Prostate gland (tissue), 2 donors: ENCODE measurements at regions of chr2 and their contacts with region 1.

Region 1: DNA sequence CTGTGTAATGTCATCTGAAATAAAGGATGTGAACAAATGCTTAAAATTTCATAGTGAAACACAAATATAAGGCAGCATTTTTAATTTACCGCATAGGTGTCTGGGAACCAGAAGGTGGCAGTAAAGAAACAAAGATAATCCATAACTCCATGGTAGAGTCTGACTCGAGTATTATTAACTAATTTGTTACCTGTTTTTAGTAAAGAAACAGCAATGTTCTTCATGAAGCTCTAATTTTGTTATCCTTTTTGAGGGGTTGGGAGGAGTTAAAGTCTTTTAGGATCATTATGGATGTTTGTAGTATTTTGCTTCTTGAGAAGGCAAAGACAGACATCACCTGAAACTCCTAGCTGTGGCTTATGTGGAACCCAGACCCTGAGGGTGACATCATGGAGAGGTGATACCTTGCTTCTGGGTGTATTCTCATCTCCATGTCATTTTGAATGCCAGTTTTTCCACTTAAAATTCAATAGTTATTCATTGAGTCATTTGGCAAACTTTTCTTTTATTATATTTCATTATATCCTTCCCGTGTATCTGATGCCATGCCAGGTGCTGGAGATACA is 286.2 kb upstream of the EPAS1 start:
- DNase-seq: no peak
- H3K4me3 ChIP-seq: no peak overlapping the region
- H3K27ac ChIP-seq: no peak overlapping the region
- H3K4me1 ChIP-seq: no peaks in the 10 kb centered on the region
- H3K27me3 ChIP-seq: no peaks in the 10 kb centered on the region
- CTCF ChIP-seq: peak; percentile 53 to 91 (median 78)
- POLR2A ChIP-seq: no peak

Region 2: DNA sequence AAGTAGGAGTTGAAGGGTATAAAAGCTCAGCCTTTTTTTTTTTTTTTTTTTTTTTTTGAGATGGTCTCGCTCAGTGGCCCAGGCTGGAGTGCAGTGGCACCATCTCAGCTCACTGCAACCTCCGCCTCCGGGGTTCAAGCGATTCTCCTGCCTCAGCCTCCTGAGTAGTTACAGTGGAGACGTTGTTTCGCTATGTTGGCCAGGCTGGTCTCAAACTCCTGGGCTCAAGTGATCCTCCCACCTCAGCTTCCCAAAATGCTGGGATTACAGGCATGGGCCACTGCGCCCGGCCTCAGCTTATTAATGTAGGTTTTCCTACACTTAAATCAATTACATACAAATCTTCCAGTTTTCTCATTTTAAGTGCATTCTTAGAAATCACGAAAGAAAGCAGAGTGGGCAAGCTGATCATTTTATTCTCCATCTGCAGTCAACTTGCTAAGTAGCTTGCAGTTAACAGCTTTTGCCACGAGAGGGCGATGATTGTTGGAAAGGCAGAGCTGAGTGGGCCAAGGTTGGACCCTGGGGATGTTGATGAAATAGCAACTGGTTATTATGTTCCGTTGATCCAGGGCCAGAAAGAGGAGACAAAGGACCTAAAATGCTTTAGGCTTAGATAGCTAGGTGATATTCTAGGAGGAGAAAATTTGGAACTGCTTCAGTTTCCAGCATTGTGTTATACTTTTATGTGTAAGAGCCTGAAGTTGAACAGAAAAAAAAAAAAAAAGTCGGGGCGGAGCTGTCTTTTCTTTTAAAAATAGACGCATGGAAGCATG is 51.8 kb after region 1 on chr2:
- intact Hi-C with region 1: loop called (anchors 5 kb)
- DNase-seq: peak; percentile 73
- H3K4me3 ChIP-seq: no peak overlapping the region
- H3K27ac ChIP-seq: no peak overlapping the region
- H3K4me1 ChIP-seq: peaks cover 12% of the 10 kb centered on the region
- H3K27me3 ChIP-seq: no peaks in the 10 kb centered on the region
- CTCF ChIP-seq: peak; percentile 46 to 85 (median 76)
- POLR2A ChIP-seq: no peak

Region 3: DNA sequence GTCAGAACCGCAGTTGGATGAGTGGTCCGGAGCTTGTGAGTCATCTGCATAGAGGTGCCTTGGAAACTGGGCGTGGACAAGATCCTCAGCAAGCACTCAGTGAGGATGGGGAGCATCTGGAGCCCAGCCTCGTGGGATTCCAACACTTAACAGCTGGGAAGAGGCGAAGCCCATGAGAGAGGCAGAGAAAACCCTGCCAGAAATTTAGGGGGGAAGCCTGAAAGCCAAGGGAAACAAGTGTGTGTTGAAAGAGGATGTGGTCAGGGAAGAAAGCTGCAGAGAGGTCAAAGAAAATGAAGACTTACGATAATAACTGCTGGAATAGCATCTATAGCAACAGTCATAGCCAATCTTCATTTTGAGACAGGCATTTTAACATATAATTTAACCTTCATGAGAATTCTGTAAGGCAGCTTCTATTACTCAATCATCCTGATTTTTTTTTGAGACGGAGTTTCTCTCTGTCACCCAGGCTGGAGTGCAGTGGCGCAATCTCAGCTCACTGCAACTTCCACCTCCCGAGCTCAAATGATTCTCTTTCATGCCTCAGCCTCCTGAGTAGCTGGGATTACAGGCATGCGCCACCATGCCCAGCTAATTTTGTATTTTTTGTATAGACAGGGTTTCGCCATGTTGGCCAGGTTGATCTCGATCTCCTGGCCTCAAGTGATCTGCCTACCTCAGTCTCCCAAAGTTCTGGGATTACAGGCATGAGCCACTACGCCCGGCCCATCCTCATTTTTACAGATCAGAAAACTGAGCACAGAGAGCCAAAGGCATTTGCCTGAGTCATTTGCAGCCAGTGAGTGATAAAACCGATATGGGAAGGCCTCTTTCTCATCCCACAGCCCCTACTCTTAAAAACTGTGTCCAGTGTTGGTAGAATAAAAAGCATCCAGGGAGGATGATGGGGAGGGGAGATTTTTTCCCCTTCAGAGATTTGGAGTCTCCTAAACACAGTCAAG is 71.8 kb after region 1 on chr2:
- intact Hi-C with region 1: no loop called
- DNase-seq: no peak
- H3K4me3 ChIP-seq: no peak overlapping the region
- H3K27ac ChIP-seq: no peak overlapping the region
- H3K4me1 ChIP-seq: no peaks in the 10 kb centered on the region
- H3K27me3 ChIP-seq: no peaks in the 10 kb centered on the region
- CTCF ChIP-seq: no peak
- POLR2A ChIP-seq: no peak